Caco-2 (cell line): ENCODE measurements at regions of chr13 and their contacts with region 1.

Region 1: GRCh38 chr13:79349011-79349410 is 57.0 kb downstream of the RBM26 start:
- DNase-seq: no peak
- H3K4me3 ChIP-seq: no peak overlapping the region
- H3K4me3 Mint-ChIP-seq: no peak overlapping the region
- H3K27ac Mint-ChIP-seq: no peak overlapping the region
- H3K4me1 ChIP-seq: no peaks in the 10 kb centered on the region
- H3K4me1 Mint-ChIP-seq: no peaks in the 10 kb centered on the region
- H3K27me3 ChIP-seq: no peaks in the 10 kb centered on the region
- H3K27me3 Mint-ChIP-seq: no peaks in the 10 kb centered on the region
- CTCF ChIP-seq: no peak

Region 2: DNA sequence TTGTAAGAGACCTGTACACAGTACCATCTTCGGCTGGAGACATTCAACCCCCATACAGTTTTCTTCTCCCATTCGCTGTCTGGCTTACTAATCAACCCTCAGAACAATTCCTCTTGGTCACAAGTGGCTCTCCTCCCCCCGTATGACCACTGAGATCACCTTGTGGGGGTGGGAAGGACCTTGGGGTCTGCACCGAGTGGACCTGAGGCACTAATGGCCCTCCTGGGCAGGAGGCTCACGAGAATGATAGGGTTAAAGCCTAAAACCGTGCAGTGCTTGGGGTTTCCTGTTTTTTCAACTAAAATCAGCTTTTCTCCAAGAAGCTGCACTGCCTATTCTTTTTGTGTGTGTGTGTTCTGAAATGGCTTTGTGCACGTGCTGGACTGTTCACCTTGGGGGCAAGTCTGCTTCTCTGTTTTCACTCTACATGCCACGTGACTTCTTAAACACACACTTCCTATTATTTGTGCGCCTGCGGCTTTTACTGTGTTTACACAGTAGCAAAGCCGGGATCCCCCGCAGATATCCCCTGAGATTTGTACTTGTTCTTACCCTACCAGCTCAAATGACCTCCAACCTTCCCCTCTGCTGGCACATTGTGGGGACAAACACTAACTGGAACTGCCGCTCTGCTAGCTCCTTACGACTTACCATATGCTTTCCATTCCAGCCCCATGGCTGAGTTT is 44.7 kb after region 1 on chr13:
- CTCF ChIA-PET with region 1: interaction called, 3 read pairs
- POLR2A ChIA-PET with region 1: no interaction called
- intact Hi-C with region 1: loop called (anchors 5 kb)
- DNase-seq: peak; percentile 64 to 74
- H3K4me3 ChIP-seq: 0 out of 2 replicates have a peak overlapping the region, but pooled peaks have one; percentile 8
- H3K4me3 Mint-ChIP-seq: peak overlapping the region; percentile 50
- H3K27ac Mint-ChIP-seq: peak overlapping the region; percentile 28
- H3K4me1 ChIP-seq: peaks cover 21% of the 10 kb centered on the region
- H3K4me1 Mint-ChIP-seq: peaks cover 23% of the 10 kb centered on the region
- H3K27me3 ChIP-seq: no peaks in the 10 kb centered on the region
- H3K27me3 Mint-ChIP-seq: no peaks in the 10 kb centered on the region
- CTCF ChIP-seq: no peak

Region 3: GRCh38 chr13:80173224-80173623 is 824.2 kb after region 1 on chr13:
- CTCF ChIA-PET with region 1: no interaction called
- POLR2A ChIA-PET with region 1: no interaction called
- intact Hi-C with region 1: no loop called
- DNase-seq: no peak
- H3K4me3 ChIP-seq: no peak overlapping the region
- H3K4me3 Mint-ChIP-seq: no peak overlapping the region
- H3K27ac Mint-ChIP-seq: no peak overlapping the region
- H3K4me1 ChIP-seq: no peaks in the 10 kb centered on the region
- H3K4me1 Mint-ChIP-seq: no peaks in the 10 kb centered on the region
- H3K27me3 ChIP-seq: no peaks in the 10 kb centered on the region
- H3K27me3 Mint-ChIP-seq: no peaks in the 10 kb centered on the region
- CTCF ChIP-seq: no peak